Activated B cell treated with CpG ODN at 0.5 μM for 24 hours (primary cell): ENCODE measurements at regions of chr11 and their contacts with region 1.

Region 1: GRCh38 chr11:117064275-117064674 is 34.0 kb downstream of the SIK3 start:
- DNase-seq: no peak
- ATAC-seq: no peak
- H3K4me3 Mint-ChIP-seq: peak overlapping the region; percentile 37
- H3K27ac Mint-ChIP-seq: peak overlapping the region; percentile 71
- H3K4me1 Mint-ChIP-seq: peaks cover 78% of the 10 kb centered on the region
- H3K27me3 Mint-ChIP-seq: no peaks in the 10 kb centered on the region
- CTCF ChIP-seq: no peak

Region 2: GRCh38 chr11:117020287-117020686 is 44.0 kb before region 1 on chr11:
- CTCF ChIA-PET with region 1: no interaction called
- POLR2A ChIA-PET with region 1: interaction called, 10 read pairs
- intact Hi-C with region 1: loop called (anchors 2 kb)
- DNase-seq: no peak
- ATAC-seq: peak; percentile 86
- H3K4me3 Mint-ChIP-seq: peak overlapping the region; percentile 45
- H3K27ac Mint-ChIP-seq: peak overlapping the region; percentile 62
- H3K4me1 Mint-ChIP-seq: peaks cover 79% of the 10 kb centered on the region
- H3K27me3 Mint-ChIP-seq: no peaks in the 10 kb centered on the region
- CTCF ChIP-seq: no peak

Region 3: DNA sequence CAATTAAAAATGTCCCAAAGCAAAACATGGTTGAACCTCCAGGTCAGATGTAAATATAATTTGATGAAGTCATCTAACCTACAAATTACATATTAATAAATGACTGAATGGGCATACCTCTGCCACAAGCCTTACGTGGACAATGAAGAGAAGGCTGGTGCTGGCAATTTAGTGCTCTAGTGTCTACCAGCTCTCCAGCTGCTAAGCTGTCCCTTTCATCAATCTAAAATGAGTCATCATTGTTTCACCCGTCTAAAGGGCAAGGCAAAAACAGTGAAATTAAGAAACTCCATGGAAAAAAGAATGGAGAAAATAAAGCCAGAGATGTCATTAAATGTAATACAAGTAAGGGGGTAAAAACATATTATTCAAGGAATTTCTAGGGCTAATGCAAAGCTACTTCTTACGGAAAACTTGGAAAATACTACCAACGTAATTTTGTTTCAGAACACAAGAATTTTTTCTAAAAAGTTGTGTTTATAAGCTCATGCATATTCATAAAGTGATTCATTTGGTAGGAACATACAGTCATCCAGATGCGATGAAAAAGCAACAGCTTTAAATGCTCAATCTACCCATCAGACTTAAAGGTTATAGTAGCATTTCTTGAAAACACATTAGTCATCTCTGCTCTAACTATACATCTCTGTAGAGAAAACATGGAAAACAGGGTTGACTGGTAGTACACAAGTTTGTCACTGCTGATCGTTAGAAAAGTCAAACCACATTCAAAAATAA is 37.5 kb before region 1 on chr11:
- CTCF ChIA-PET with region 1: no interaction called
- POLR2A ChIA-PET with region 1: interaction called, 10 read pairs
- intact Hi-C with region 1: loop called (anchors 2 kb)
- DNase-seq: no peak
- ATAC-seq: peak; percentile 35
- H3K4me3 Mint-ChIP-seq: no peak overlapping the region
- H3K27ac Mint-ChIP-seq: peak overlapping the region; percentile 57
- H3K4me1 Mint-ChIP-seq: peaks cover 84% of the 10 kb centered on the region
- H3K27me3 Mint-ChIP-seq: no peaks in the 10 kb centered on the region
- CTCF ChIP-seq: no peak

Region 4: DNA sequence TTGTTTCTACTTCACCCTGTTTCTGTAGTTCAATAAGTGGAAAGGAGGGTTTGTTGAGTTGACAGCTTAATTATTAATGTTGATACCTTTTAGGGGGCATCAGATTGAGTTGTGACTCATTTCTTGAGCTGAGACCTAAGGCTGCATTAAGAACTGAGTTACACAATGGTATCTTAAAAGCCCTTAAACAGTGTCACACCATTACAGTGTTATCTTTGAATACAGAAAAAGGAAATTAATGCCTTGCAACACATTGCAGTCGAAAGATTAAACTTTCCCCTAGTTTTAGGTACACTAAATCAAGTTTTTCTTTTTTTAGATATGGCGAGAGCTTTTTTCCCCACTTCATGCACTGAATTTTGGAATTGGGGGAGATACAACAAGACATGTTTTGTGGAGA is 96.6 kb after region 1 on chr11:
- CTCF ChIA-PET with region 1: no interaction called
- POLR2A ChIA-PET with region 1: no interaction called
- intact Hi-C with region 1: no loop called
- DNase-seq: no peak
- ATAC-seq: no peak
- H3K4me3 Mint-ChIP-seq: no peak overlapping the region
- H3K27ac Mint-ChIP-seq: no peak overlapping the region
- H3K4me1 Mint-ChIP-seq: peaks cover 16% of the 10 kb centered on the region
- H3K27me3 Mint-ChIP-seq: no peaks in the 10 kb centered on the region
- CTCF ChIP-seq: no peak

Region 5: GRCh38 chr11:117259417-117259816 is 195.1 kb after region 1 on chr11:
- CTCF ChIA-PET with region 1: no interaction called
- POLR2A ChIA-PET with region 1: no interaction called
- intact Hi-C with region 1: no loop called
- DNase-seq: no peak
- ATAC-seq: no peak
- H3K4me3 Mint-ChIP-seq: no peak overlapping the region
- H3K27ac Mint-ChIP-seq: no peak overlapping the region
- H3K4me1 Mint-ChIP-seq: no peaks in the 10 kb centered on the region
- H3K27me3 Mint-ChIP-seq: no peaks in the 10 kb centered on the region
- CTCF ChIP-seq: no peak